Mammary epithelial cell (primary cell): ENCODE measurements at regions of chr14 and their contacts with region 1.

Region 1: GRCh38 chr14:76647697-76648298 is 113.5 kb upstream of the VASH1 start:
- DNase-seq: peak; percentile 44
- H3K4me3 ChIP-seq: no peak overlapping the region
- H3K27ac ChIP-seq: no peak overlapping the region
- H3K4me1 ChIP-seq: no peaks in the 10 kb centered on the region
- H3K27me3 ChIP-seq: no peaks in the 10 kb centered on the region
- CTCF ChIP-seq: peak; percentile 88 to 90

Region 2: GRCh38 chr14:75906676-75907280 is 741.0 kb before region 1 on chr14:
- CTCF ChIA-PET with region 1: no interaction called
- dilution Hi-C with region 1: no loop called
- in situ Hi-C with region 1: no loop called
- intact Hi-C with region 1: loop called (anchors 10 kb)
- DNase-seq: peak; percentile 33
- H3K4me3 ChIP-seq: no peak overlapping the region
- H3K27ac ChIP-seq: no peak overlapping the region
- H3K4me1 ChIP-seq: peaks cover 10% of the 10 kb centered on the region
- H3K27me3 ChIP-seq: no peaks in the 10 kb centered on the region
- CTCF ChIP-seq: peak; percentile 82 to 93

Region 3: GRCh38 chr14:76050797-76051392 is 596.9 kb before region 1 on chr14:
- CTCF ChIA-PET with region 1: no interaction called
- dilution Hi-C with region 1: no loop called
- in situ Hi-C with region 1: loop called (anchors 10 kb)
- intact Hi-C with region 1: loop called (anchors 1 kb)
- DNase-seq: peak; percentile 33
- H3K4me3 ChIP-seq: no peak overlapping the region
- H3K27ac ChIP-seq: no peak overlapping the region
- H3K4me1 ChIP-seq: no peaks in the 10 kb centered on the region
- H3K27me3 ChIP-seq: no peaks in the 10 kb centered on the region
- CTCF ChIP-seq: peak; percentile 61 to 72

Region 4: GRCh38 chr14:76203086-76204001 is 444.5 kb before region 1 on chr14:
- CTCF ChIA-PET with region 1: no interaction called
- dilution Hi-C with region 1: no loop called
- in situ Hi-C with region 1: no loop called
- intact Hi-C with region 1: loop called (anchors 5 kb)
- DNase-seq: peak; percentile 85
- H3K4me3 ChIP-seq: no peak overlapping the region
- H3K27ac ChIP-seq: peak overlapping the region; percentile 47
- H3K4me1 ChIP-seq: peaks cover 28% of the 10 kb centered on the region
- H3K27me3 ChIP-seq: no peaks in the 10 kb centered on the region
- CTCF ChIP-seq: no peak

Region 5: DNA sequence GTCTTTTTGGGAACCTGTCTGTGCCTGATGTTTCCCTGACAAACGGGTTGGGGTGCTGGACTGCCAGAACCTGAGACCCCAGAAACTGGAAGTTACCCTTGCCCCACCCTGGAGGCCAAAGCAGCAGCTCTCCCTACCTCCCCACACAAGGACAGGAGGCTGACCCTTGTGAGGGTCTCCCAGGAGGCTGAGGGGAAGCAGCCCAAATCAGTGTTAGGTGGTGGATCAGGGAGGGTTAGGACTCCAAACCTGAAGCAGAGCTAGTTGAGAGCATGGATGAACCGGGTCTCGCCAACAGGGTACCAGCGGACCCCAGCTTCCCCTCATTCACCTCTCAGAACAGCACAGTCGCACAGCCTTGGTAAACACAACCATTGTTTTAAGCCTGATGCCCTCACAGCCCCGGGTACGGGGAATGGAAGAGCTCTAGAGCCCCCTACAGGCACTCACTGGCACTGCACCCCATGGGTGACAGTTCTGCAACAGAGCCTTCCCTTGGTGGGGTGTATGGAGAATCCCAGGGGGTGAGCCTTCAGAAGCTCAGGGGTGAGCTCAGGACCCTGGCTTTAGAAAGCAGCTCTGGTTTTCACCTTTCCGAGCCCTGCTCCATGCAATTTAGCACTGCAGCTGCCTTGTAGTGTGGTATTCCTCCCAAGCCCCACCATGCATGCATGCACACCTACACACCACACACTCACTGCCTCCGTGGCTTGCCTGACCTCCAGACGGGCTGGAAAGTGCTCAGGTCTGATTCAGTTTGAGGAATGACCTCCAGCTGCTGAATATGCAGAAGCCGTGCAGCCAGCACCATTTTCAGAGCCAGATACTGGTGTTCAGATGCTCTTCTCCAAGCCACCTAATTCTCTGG is 260.6 kb before region 1 on chr14:
- CTCF ChIA-PET with region 1: no interaction called
- dilution Hi-C with region 1: no loop called
- in situ Hi-C with region 1: loop called in 1 of 2 experiments (anchors 25 kb)
- intact Hi-C with region 1: loop called (anchors 1 kb)
- DNase-seq: peak; percentile 53
- H3K4me3 ChIP-seq: no peak overlapping the region
- H3K27ac ChIP-seq: no peak overlapping the region
- H3K4me1 ChIP-seq: no peaks in the 10 kb centered on the region
- H3K27me3 ChIP-seq: peaks cover 5% of the 10 kb centered on the region
- CTCF ChIP-seq: peak; percentile 99 to 100

Region 6: GRCh38 chr14:76514613-76515012 is 133.2 kb before region 1 on chr14:
- CTCF ChIA-PET with region 1: no interaction called
- dilution Hi-C with region 1: no loop called
- in situ Hi-C with region 1: loop called in 1 of 2 experiments (anchors 10 kb)
- intact Hi-C with region 1: loop called (anchors 1 kb)
- DNase-seq: peak; percentile 46
- H3K4me3 ChIP-seq: no peak overlapping the region
- H3K27ac ChIP-seq: no peak overlapping the region
- H3K4me1 ChIP-seq: peaks cover 11% of the 10 kb centered on the region
- H3K27me3 ChIP-seq: no peaks in the 10 kb centered on the region
- CTCF ChIP-seq: peak; percentile 62 to 74